AG04449 (cell line): ENCODE measurements at regions of chr11 and their contacts with region 1.

Region 1: GRCh38 chr11:64000026-64000739 is 13.9 kb downstream of the OTUB1 start:
- DNase-seq: no peak
- H3K4me3 ChIP-seq: peak overlapping the region; percentile 36
- CTCF ChIP-seq: peak; percentile 86

Region 2: GRCh38 chr11:64015935-64016845 is 16.0 kb after region 1 on chr11:
- CTCF ChIA-PET with region 1: interaction called, 25 read pairs
- POLR2A ChIA-PET with region 1: no interaction called
- DNase-seq: no peak
- H3K4me3 ChIP-seq: no peak overlapping the region
- CTCF ChIP-seq: no peak

Region 3: GRCh38 chr11:64120951-64121569 is 120.9 kb after region 1 on chr11:
- CTCF ChIA-PET with region 1: interaction called, 25 read pairs
- POLR2A ChIA-PET with region 1: no interaction called
- DNase-seq: peak; percentile 4
- H3K4me3 ChIP-seq: no peak overlapping the region
- CTCF ChIP-seq: no peak

Region 4: GRCh38 chr11:64141081-64141783 is 141.0 kb after region 1 on chr11:
- CTCF ChIA-PET with region 1: interaction called, 591 read pairs
- POLR2A ChIA-PET with region 1: no interaction called
- DNase-seq: no peak
- H3K4me3 ChIP-seq: no peak overlapping the region
- CTCF ChIP-seq: no peak

Region 5: DNA sequence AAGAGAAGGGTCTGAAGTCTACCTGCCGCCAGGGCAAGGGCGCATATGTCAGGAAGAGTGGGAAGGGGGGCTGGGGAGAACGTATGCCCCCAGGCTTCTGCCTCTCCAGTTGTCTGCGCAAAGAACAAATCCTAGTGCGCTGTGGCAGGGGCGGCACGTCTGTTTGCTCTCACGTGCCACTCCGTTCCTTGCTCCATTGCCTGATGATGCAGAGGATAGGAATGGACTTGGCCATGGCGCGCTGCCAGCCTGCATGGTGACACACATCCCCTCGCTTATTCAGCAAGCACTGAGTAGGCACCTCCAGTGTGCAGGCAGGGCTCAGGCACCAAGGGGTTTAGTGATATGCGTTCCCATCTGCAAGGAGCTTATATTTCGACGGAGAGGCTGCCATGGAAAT is 545.4 kb after region 1 on chr11:
- CTCF ChIA-PET with region 1: no interaction called
- POLR2A ChIA-PET with region 1: no interaction called
- DNase-seq: no peak
- H3K4me3 ChIP-seq: no peak overlapping the region
- CTCF ChIP-seq: no peak